OCI-LY7 (cell line): ENCODE measurements at regions of chr2 and their contacts with region 1.

Region 1: DNA sequence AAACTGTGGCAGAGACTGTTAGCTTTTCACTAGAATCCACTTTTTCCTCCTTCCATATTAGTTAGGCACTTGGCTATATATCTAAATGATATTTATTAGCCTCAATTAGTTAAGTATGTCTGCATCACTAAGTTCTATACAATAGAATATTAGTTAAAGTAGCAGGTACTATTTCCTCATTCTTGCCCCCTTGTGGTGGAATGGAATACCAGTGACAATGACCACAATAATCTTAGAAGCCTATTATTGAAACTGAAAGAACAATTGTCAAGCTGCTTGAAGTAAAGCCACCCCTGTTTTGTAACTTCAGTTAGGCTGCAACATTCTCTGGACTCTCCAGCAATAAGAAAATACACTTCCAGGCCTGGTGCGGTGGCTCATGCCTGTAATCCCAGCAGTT is 476.3 kb upstream of the VWC2L start:
- DNase-seq: peak; percentile 54
- H3K4me3 ChIP-seq: no peak overlapping the region
- H3K27ac ChIP-seq: no peak overlapping the region
- H3K4me1 ChIP-seq: no peaks in the 10 kb centered on the region
- CTCF ChIP-seq: peak; percentile 80

Region 2: DNA sequence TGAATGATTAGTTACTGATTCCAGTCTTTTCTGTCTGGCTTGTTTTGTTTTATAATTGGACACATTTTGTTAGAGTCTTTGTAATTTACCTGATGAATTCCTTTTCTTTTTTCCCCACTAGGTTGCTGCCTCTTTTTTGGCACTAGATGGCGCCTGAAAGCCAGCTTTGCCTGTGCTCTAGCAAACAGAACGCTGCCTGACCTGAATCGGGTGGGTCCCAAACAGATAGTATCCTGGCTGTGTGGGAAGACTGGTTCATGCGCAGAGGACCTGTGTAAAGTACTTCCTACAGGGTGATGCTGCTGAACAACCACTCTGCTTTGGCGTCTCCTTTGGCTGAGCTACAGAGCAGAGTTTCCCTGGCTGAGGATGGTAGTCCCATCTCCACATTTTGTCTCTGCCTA is 1071.4 kb before region 1 on chr2:
- CTCF ChIA-PET with region 1: no interaction called
- POLR2A ChIA-PET with region 1: no interaction called
- intact Hi-C with region 1: loop called (anchors 5 kb)
- DNase-seq: peak; percentile 84
- H3K4me3 ChIP-seq: no peak overlapping the region
- H3K27ac ChIP-seq: no peak overlapping the region
- H3K4me1 ChIP-seq: no peaks in the 10 kb centered on the region
- CTCF ChIP-seq: peak; percentile 98